ENCODE measurements at regions of chr7 and their contacts with region 1.

Region 1: GRCh38 chr7:21507626-21508343 is 35.1 kb upstream of the DNAH11 start:
- DNase-seq: peak; percentile 16 to 65 (median 25)
- ATAC-seq: peak; percentile 95
- H3K4me3 ChIP-seq: no peak overlapping the region
- H3K27ac ChIP-seq: no peak overlapping the region
- H3K4me1 ChIP-seq: no peaks in the 10 kb centered on the region
- H3K27me3 ChIP-seq: no peaks in the 10 kb centered on the region
- CTCF ChIP-seq: peak; percentile 75 to 86 (median 75)
- EP300 ChIP-seq: no peak
- POLR2A ChIP-seq: no peak
- RAD21 ChIP-seq: peak; percentile 80 to 89

Region 2: DNA sequence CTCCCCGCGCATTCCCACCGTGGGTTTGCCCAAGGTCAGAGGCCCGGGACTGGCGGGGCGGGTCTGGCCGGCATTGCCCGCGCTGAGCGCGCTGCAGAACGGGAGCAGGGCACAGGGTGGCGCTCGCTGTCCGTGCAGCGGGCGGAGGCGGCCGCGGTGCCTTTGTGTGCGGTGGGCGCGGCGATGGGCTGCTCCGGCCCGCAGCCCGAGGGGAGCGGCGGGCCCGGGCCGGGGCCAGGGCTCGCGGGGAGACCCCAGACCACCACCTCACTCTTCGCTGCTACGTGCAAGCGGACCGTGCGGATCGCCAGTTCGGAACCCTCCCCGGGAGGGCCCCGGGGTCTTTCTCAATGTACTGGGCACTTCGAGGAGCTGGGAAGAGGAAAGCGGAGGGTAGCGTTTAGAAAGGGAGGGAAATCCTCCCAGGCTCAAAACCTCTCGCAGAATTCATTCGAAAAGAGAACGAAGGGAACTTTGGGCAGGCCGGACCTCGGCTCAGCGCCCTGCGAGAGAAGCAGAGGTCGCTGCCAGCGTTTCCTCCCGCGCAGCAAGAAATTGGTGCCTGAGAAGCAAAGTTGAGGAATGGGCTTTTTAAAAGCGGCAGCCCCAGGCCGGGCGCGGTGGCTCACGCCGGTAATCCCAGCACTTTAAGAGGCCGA is 729.6 kb before region 1 on chr7:
- CTCF ChIA-PET with region 1: no interaction called
- POLR2A ChIA-PET with region 1: no interaction called
- in situ Hi-C with region 1: no loop called
- intact Hi-C with region 1: loop called (anchors 10 kb)
- DNase-seq: peak in 3 of 4 experiments; percentile 28 to 37 (median 36)
- ATAC-seq: peak; percentile 98
- H3K4me3 ChIP-seq: no peak overlapping the region
- H3K27ac ChIP-seq: no peak overlapping the region
- H3K4me1 ChIP-seq: peaks cover 0 to 12% of the 10 kb centered on the region in 2 experiments; a peak in 1 of 5 replicates
- H3K27me3 ChIP-seq: peaks cover 21 to 29% of the 10 kb centered on the region in 2 experiments
- CTCF ChIP-seq: peak; percentile 40 to 65 (median 51); a peak in 4 of 6 replicates
- EP300 ChIP-seq: no peak
- POLR2A ChIP-seq: no peak
- RAD21 ChIP-seq: peak; percentile 59 to 75

Region 3: DNA sequence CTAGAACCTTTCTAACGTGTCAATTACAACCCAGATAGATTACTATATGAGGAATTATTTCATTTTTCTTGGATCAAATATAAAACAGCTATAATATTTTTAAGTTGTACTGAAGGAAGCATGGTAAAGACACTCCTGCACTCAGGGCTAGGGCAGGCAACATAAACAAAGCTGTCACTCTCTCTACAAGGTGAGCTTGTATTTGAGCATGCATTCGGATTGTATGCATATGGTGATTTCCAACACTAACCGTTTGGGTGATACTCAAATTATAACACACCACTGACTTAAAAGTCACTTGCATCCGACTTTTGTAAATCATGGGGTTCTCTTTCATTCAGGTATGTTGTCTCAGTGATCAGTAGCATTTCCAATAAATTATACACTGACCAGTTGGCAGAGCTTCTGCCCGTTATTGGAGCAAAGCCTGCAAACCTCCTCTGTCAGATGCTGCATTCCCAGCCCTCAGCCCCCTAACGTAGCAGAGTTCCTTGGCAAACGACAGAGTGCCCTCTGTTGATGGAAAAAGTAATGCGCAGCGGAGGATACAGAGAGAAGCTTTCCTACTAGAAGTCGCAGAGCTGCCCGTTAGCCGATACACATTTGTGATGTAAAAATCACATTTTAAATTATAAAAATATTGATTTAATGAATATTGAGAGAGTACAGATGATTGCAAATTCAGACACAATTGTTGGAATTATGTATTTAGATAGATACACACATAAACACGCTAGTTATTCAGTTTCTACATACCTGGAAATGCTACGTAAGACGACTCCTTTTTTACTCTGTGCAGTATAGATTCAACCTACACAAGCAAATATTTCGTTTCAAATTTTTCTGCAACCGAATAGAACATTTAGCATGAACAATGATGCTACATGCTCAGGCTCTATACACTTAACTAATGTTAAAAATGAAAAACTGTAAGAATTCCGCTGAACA is 253.8 kb before region 1 on chr7:
- CTCF ChIA-PET with region 1: interaction called, 15 read pairs
- POLR2A ChIA-PET with region 1: no interaction called
- in situ Hi-C with region 1: loop called (anchors 5 kb)
- intact Hi-C with region 1: no loop called
- DNase-seq: peak; percentile 10 to 66 (median 24)
- ATAC-seq: peak; percentile 96
- H3K4me3 ChIP-seq: no peak overlapping the region
- H3K27ac ChIP-seq: no peak overlapping the region
- H3K4me1 ChIP-seq: no peaks in the 10 kb centered on the region
- H3K27me3 ChIP-seq: peaks cover 0 to 2% of the 10 kb centered on the region in 2 experiments; a peak in 2 of 5 replicates
- CTCF ChIP-seq: peak; percentile 60 to 66 (median 62)
- EP300 ChIP-seq: no peak
- POLR2A ChIP-seq: no peak
- RAD21 ChIP-seq: peak; percentile 61 to 65

Region 4: GRCh38 chr7:21261627-21262594 is 245.9 kb before region 1 on chr7:
- CTCF ChIA-PET with region 1: interaction called, 15 read pairs
- POLR2A ChIA-PET with region 1: interaction called, 3 read pairs
- in situ Hi-C with region 1: loop called (anchors 5 kb)
- intact Hi-C with region 1: loop called (anchors 1 kb)
- DNase-seq: peak; percentile 22 to 56 (median 32)
- ATAC-seq: peak; percentile 98
- H3K4me3 ChIP-seq: no peak overlapping the region
- H3K27ac ChIP-seq: no peak overlapping the region
- H3K4me1 ChIP-seq: no peaks in the 10 kb centered on the region
- H3K27me3 ChIP-seq: no peaks in the 10 kb centered on the region
- CTCF ChIP-seq: peak; percentile 66 to 71 (median 67)
- EP300 ChIP-seq: no peak
- POLR2A ChIP-seq: no peak
- RAD21 ChIP-seq: peak; percentile 41 to 72; a peak in 3 of 4 replicates

Region 5: DNA sequence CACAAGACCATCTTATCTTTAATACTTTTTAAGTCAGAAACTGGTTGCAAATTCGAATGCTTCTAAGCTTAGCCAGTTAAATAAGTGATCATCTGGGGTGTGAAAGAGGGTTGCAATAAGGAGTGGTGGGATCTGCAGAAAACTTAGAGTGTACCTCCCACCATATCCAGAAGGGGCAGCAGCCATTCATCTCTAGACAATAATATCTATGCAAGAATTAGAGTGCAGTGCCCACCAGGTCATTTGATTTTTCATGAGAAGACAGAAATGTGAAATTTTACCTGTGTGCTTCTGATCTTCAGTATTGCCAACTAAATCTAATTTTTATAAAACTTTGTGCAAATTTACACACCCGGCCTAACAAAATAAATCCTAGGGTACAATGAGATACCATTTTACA is 207.1 kb before region 1 on chr7:
- CTCF ChIA-PET with region 1: no interaction called
- POLR2A ChIA-PET with region 1: no interaction called
- in situ Hi-C with region 1: no loop called
- intact Hi-C with region 1: loop called (anchors 10 kb)
- DNase-seq: peak; percentile 2 to 30 (median 8)
- ATAC-seq: peak; percentile 82
- H3K4me3 ChIP-seq: no peak overlapping the region
- H3K27ac ChIP-seq: no peak overlapping the region
- H3K4me1 ChIP-seq: no peaks in the 10 kb centered on the region
- H3K27me3 ChIP-seq: no peaks in the 10 kb centered on the region
- CTCF ChIP-seq: peak; percentile 31 to 46 (median 46); a peak in 5 of 6 replicates
- EP300 ChIP-seq: no peak
- POLR2A ChIP-seq: no peak
- RAD21 ChIP-seq: no peak; a peak in 1 of 4 replicates

Region 6: DNA sequence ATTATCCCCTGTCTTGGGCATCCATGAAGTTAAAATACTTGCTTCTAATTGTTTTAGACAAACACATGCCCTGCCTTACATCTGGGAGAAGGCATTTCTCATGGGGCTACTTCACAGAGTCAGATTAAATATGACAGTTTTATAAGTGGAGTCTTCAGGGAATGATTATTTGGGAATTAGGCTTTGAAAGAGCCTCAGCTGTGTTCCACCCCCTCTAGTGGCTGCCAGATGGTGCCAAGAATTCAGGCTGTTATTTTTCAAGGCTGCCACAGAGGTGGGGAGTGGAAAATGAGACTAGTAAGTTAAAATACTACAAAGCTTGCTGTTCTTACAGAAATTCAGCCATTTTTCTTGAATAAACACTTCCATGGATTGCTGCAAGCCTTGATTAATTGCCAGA is 10.7 kb before region 1 on chr7:
- CTCF ChIA-PET with region 1: no interaction called
- POLR2A ChIA-PET with region 1: no interaction called
- in situ Hi-C with region 1: no loop called
- intact Hi-C with region 1: no loop called
- DNase-seq: no peak
- ATAC-seq: no peak
- H3K4me3 ChIP-seq: no peak overlapping the region
- H3K27ac ChIP-seq: no peak overlapping the region
- H3K4me1 ChIP-seq: no peaks in the 10 kb centered on the region
- H3K27me3 ChIP-seq: no peaks in the 10 kb centered on the region
- CTCF ChIP-seq: no peak
- EP300 ChIP-seq: no peak
- POLR2A ChIP-seq: no peak
- RAD21 ChIP-seq: no peak

Region 7: GRCh38 chr7:21557661-21558060 is 49.9 kb after region 1 on chr7:
- CTCF ChIA-PET with region 1: no interaction called
- POLR2A ChIA-PET with region 1: no interaction called
- in situ Hi-C with region 1: no loop called
- intact Hi-C with region 1: no loop called
- DNase-seq: no peak
- ATAC-seq: no peak
- H3K4me3 ChIP-seq: no peak overlapping the region
- H3K27ac ChIP-seq: no peak overlapping the region
- H3K4me1 ChIP-seq: no peaks in the 10 kb centered on the region
- H3K27me3 ChIP-seq: no peaks in the 10 kb centered on the region
- CTCF ChIP-seq: no peak
- EP300 ChIP-seq: no peak
- POLR2A ChIP-seq: no peak
- RAD21 ChIP-seq: no peak

Region 8: GRCh38 chr7:21767300-21767900 is 259.6 kb after region 1 on chr7:
- CTCF ChIA-PET with region 1: no interaction called
- POLR2A ChIA-PET with region 1: no interaction called
- in situ Hi-C with region 1: no loop called
- intact Hi-C with region 1: loop called (anchors 2 kb)
- DNase-seq: peak; percentile 37 to 74 (median 52)
- ATAC-seq: peak; percentile 98
- H3K4me3 ChIP-seq: no peak overlapping the region
- H3K27ac ChIP-seq: no peak overlapping the region
- H3K4me1 ChIP-seq: peaks cover 0 to 3% of the 10 kb centered on the region in 2 experiments; a peak in 1 of 5 replicates
- H3K27me3 ChIP-seq: peaks cover 0 to 2% of the 10 kb centered on the region in 2 experiments; a peak in 1 of 5 replicates
- CTCF ChIP-seq: peak; percentile 78 to 96 (median 95)
- EP300 ChIP-seq: no peak
- POLR2A ChIP-seq: no peak
- RAD21 ChIP-seq: peak; percentile 61 to 78

Measured in K562 (cell line).